OCI-LY7 (cell line): ENCODE measurements at regions of chr2 and their contacts with region 1.

Region 1: GRCh38 chr2:196719110-196719872 is 79.8 kb downstream of the CCDC150 start:
- DNase-seq: no peak
- H3K4me3 ChIP-seq: no peak overlapping the region
- H3K27ac ChIP-seq: no peak overlapping the region
- H3K4me1 ChIP-seq: no peaks in the 10 kb centered on the region
- CTCF ChIP-seq: no peak

Region 2: DNA sequence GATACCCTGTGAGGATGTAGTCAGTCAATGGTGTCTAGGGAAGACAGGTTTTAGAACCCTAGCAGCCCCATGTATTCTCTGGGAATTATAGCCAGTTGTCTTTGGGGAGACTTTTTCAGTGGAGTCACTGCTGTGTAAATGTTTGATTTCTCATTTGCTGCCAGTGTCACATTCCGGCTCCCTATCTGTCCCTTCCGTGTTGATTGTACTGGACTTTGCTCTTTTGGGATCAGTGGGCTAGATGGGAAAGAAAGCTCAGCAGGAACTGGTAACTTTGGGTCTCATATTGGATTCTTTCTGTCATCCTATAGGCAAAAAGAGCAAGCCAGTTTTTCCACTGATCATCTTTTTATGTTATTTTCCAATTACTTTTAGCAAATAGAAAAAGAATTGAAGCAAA is 10.1 kb after region 1 on chr2:
- CTCF ChIA-PET with region 1: no interaction called
- POLR2A ChIA-PET with region 1: interaction called, 14 read pairs
- intact Hi-C with region 1: no loop called
- DNase-seq: no peak
- H3K4me3 ChIP-seq: no peak overlapping the region
- H3K27ac ChIP-seq: no peak overlapping the region
- H3K4me1 ChIP-seq: no peaks in the 10 kb centered on the region
- CTCF ChIP-seq: no peak

Region 3: GRCh38 chr2:196767101-196767500 is 47.8 kb after region 1 on chr2:
- CTCF ChIA-PET with region 1: no interaction called
- POLR2A ChIA-PET with region 1: interaction called, 11 read pairs
- intact Hi-C with region 1: no loop called
- DNase-seq: no peak
- H3K4me3 ChIP-seq: no peak overlapping the region
- H3K27ac ChIP-seq: no peak overlapping the region
- H3K4me1 ChIP-seq: no peaks in the 10 kb centered on the region
- CTCF ChIP-seq: no peak